ENCODE measurements at regions of chr18 and their contacts with region 1.

Region 1: DNA sequence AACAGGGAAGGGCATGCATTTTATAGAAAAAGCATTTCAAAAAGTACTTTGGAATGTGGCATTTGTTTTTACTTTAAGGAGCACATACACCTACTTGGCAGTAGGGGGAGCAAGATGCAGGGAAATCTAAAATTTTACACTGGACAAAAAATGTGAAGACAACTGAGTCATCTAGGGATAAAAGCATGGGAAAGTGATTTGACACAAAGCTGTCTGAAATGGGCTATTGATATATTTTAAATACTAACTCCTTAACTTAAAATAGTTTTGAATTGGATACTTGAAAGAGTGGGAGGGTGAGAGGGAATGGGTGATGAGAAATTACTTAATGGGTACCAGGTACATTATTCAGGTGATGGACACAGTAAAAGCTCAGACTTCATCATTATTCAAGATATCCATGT is 15.8 kb downstream of the TMEM200C start:
- DNase-seq: no peak
- ATAC-seq: no peak
- H3K4me3 ChIP-seq: no peak overlapping the region
- H3K4me3 Mint-ChIP-seq: no peak overlapping the region
- H3K27ac ChIP-seq: no peak overlapping the region
- H3K27ac Mint-ChIP-seq: no peak overlapping the region
- H3K4me1 ChIP-seq: no peaks in the 10 kb centered on the region
- H3K4me1 Mint-ChIP-seq: no peaks in the 10 kb centered on the region
- H3K27me3 ChIP-seq: no peaks in the 10 kb centered on the region
- H3K27me3 Mint-ChIP-seq: peaks cover 0 to 40% (median 27%) of the 10 kb centered on the region in 5 donors

Region 2: DNA sequence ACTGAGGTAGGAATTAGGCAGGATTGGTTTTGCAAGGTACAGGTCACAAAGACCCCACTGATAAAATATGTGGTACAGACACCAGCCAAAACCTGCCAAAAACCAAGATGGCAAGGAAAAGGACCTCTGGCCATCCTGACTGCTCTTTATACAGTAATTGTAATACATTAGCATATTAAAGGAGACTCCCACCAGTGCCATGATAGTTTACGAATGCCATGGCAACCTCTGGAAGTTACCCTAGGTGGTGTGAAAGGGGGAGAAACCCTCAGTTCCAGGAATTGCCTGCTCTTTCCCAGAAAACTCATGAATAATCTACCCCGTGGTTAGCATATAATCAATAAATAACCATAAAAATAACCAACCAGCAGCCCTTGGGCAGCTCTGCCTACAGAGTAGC is 205.9 kb before region 1 on chr18:
- CTCF ChIA-PET with region 1: no interaction called
- POLR2A ChIA-PET with region 1: no interaction called
- intact Hi-C with region 1: no loop called
- DNase-seq: no peak
- ATAC-seq: no peak
- H3K4me3 ChIP-seq: no peak overlapping the region
- H3K4me3 Mint-ChIP-seq: no peak overlapping the region
- H3K27ac ChIP-seq: no peak overlapping the region
- H3K27ac Mint-ChIP-seq: no peak overlapping the region
- H3K4me1 ChIP-seq: no peaks in the 10 kb centered on the region
- H3K4me1 Mint-ChIP-seq: no peaks in the 10 kb centered on the region
- H3K27me3 ChIP-seq: no peaks in the 10 kb centered on the region
- H3K27me3 Mint-ChIP-seq: peaks cover 0 to 14% (median 7%) of the 10 kb centered on the region in 5 donors

Region 3: DNA sequence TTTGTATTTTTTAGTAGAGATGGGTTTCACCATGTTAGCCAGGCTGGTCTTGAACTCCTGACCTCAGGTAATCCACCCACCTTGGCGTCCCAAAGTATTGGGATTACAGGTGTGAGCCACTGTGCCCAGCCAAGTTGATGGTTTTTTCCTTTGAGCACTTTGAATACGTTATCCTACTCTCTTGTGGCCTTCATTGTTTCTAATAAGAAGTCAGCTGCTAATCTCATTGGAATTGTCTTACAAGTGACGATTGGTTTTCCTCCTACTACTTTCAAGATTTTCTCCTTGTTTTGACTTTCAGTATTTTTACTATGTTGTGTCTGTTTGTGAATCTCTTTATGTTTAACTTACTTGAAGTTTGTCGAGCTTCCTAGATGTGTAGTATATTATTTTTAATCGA is 72.6 kb before region 1 on chr18:
- CTCF ChIA-PET with region 1: no interaction called
- POLR2A ChIA-PET with region 1: no interaction called
- intact Hi-C with region 1: no loop called
- DNase-seq: no peak
- ATAC-seq: no peak
- H3K4me3 ChIP-seq: no peak overlapping the region
- H3K4me3 Mint-ChIP-seq: no peak overlapping the region
- H3K27ac ChIP-seq: no peak overlapping the region
- H3K27ac Mint-ChIP-seq: no peak overlapping the region
- H3K4me1 ChIP-seq: no peaks in the 10 kb centered on the region
- H3K4me1 Mint-ChIP-seq: no peaks in the 10 kb centered on the region
- H3K27me3 ChIP-seq: no peaks in the 10 kb centered on the region
- H3K27me3 Mint-ChIP-seq: peaks cover 0 to 15% (median 8%) of the 10 kb centered on the region in 5 donors

Region 4: GRCh38 chr18:5890331-5891183 is 11.1 kb after region 1 on chr18:
- CTCF ChIA-PET with region 1: no interaction called
- POLR2A ChIA-PET with region 1: no interaction called
- intact Hi-C with region 1: no loop called
- DNase-seq: peak in 6 of 9 donors; percentile 11 to 32 (median 24)
- ATAC-seq: peak; percentile 77
- H3K4me3 ChIP-seq: no peak overlapping the region
- H3K4me3 Mint-ChIP-seq: peak overlapping the region in 7 of 10 donors; percentile 7 to 78 (median 27)
- H3K27ac ChIP-seq: no peak overlapping the region
- H3K27ac Mint-ChIP-seq: no peak overlapping the region
- H3K4me1 ChIP-seq: peaks cover 0 to 4% of the 10 kb centered on the region in 2 donors
- H3K4me1 Mint-ChIP-seq: peaks cover 0 to 23% (median 12%) of the 10 kb centered on the region in 7 donors
- H3K27me3 ChIP-seq: peaks cover 3% of the 10 kb centered on the region in 2 donors
- H3K27me3 Mint-ChIP-seq: peaks cover 60 to 70% (median 63%) of the 10 kb centered on the region in 5 donors

Region 5: GRCh38 chr18:6482198-6482977 is 602.9 kb after region 1 on chr18:
- CTCF ChIA-PET with region 1: no interaction called
- POLR2A ChIA-PET with region 1: no interaction called
- intact Hi-C with region 1: loop called in 1 of 2 experiments (anchors 2 kb)
- DNase-seq: no peak
- ATAC-seq: peak; percentile 54
- H3K4me3 ChIP-seq: no peak overlapping the region
- H3K4me3 Mint-ChIP-seq: no peak overlapping the region
- H3K27ac ChIP-seq: no peak overlapping the region
- H3K27ac Mint-ChIP-seq: no peak overlapping the region
- H3K4me1 ChIP-seq: no peaks in the 10 kb centered on the region
- H3K4me1 Mint-ChIP-seq: no peaks in the 10 kb centered on the region
- H3K27me3 ChIP-seq: no peaks in the 10 kb centered on the region
- H3K27me3 Mint-ChIP-seq: peaks cover 0 to 6% (median 4%) of the 10 kb centered on the region in 5 donors

Region 6: DNA sequence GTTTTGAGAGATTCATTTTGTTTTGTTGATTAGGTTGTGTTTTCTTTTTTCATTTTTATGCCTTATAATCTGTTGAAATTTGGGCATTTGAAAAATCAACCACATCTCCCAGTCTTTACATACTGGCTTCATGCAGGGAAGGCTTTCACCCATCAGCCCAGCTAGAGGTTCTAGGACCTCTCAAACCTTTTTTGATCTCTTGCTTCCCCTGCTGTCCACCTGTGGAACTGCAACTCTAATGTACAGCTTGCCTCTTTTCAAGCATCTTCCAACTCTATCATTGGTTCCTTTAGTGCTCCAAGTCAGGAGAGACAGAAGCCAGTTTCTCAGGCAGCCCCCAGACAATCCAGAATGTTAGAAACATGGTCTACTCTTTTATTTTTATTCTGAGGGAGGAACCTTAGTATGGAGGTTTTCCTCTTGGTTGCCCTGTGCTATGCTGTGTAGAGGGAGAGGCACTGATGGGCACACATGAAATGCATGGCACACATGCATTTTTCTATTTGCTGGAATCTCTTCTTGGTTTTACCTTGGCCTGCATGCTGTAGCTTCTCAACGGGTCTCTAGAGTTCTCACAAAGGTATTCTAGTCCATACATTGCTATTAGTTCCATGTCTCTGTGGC is 642.4 kb after region 1 on chr18:
- CTCF ChIA-PET with region 1: no interaction called
- POLR2A ChIA-PET with region 1: no interaction called
- intact Hi-C with region 1: loop called in 1 of 2 experiments (anchors 1 kb)
- DNase-seq: peak in 1 of 9 donors; percentile 23
- ATAC-seq: no peak
- H3K4me3 ChIP-seq: no peak overlapping the region
- H3K4me3 Mint-ChIP-seq: no peak overlapping the region
- H3K27ac ChIP-seq: no peak overlapping the region
- H3K27ac Mint-ChIP-seq: no peak overlapping the region
- H3K4me1 ChIP-seq: no peaks in the 10 kb centered on the region
- H3K4me1 Mint-ChIP-seq: no peaks in the 10 kb centered on the region
- H3K27me3 ChIP-seq: no peaks in the 10 kb centered on the region
- H3K27me3 Mint-ChIP-seq: peaks cover 0 to 4% (median 0%) of the 10 kb centered on the region in 5 donors

Measured in naive thymus-derived CD4-positive, alpha-beta T cell (primary cell).